ENCODE measurements at regions of chr10 and their contacts with region 1.

Region 1: DNA sequence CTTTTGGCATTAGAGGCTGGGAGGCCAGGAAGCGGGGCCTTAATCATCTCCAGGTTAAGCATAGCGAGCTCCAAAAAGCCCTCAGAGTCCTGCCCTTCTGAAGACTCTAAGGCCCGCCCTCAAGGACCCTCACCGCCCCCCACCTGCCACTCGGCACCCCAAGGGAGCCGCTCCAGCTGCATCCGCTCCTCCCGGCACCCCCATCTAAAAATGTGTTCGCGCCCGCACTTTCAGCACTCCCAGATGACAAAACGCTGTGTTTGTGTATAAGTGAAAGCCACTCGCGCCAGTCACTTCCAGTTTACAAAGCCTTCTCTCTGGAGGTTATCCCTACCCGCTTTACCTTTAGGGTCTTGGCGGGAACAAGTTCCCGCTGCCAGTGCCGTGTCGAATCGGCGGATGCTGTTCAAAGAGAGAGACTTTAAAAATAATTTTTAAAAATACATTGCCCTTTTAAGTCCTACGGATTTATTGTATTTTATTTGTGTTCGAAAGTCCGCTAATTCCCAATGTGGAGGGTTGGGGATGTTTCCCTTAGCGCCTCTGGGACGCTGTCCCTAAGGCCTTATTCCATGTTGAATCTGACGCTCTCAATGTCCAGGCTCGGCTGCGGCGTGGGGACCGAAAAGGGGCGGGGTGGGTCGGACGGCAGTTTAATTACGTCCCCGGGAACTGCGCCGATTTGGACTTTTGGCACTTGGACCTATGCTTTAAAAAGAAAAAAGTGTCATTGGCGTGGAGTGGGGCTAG is at the starts of genes DCLRE1A and NHLRC2:
- DNase-seq: peak; percentile 29
- H3K4me3 Mint-ChIP-seq: peak within 1 kb of the TSS; percentile 97
- H3K27ac Mint-ChIP-seq: peak within 1 kb of the TSS; percentile 95
- H3K4me1 Mint-ChIP-seq: peaks cover 56% of the 10 kb centered on the region
- H3K27me3 Mint-ChIP-seq: no peaks in the 10 kb centered on the region
- total RNA-seq, gene DCLRE1A: 14.1 and 15.2 TPM in 2 replicates
- total RNA-seq, gene NHLRC2: 25.9 and 26.0 TPM in 2 replicates

Region 2: DNA sequence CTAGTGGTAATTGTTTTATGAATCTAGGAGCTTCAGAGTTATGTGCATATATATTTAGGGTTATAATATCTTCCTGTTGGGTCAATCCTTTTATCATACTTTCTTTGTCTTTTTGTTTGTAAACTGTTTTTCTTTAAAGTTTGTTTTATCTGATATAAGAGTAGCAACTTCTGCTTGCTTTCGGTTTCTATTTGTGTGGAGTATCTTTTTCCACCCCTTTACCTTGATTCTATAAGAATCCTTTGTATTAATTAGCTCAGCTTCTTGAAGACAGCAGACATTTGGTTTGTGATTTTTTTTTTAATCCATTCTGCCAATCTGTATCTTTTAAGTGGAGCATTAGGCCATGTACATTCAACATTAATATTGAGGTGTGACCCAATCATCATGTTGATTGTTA is 165.1 kb before region 1 on chr10:
- intact Hi-C with region 1: loop called (anchors 5 kb)
- DNase-seq: no peak
- H3K4me3 Mint-ChIP-seq: peak overlapping the region; percentile 24
- H3K27ac Mint-ChIP-seq: peak overlapping the region; percentile 26
- H3K4me1 Mint-ChIP-seq: peaks cover 33% of the 10 kb centered on the region
- H3K27me3 Mint-ChIP-seq: no peaks in the 10 kb centered on the region

Region 3: GRCh38 chr10:113820507-113820906 is 33.7 kb before region 1 on chr10:
- intact Hi-C with region 1: no loop called
- DNase-seq: no peak
- H3K4me3 Mint-ChIP-seq: no peak overlapping the region
- H3K27ac Mint-ChIP-seq: no peak overlapping the region
- H3K4me1 Mint-ChIP-seq: no peaks in the 10 kb centered on the region
- H3K27me3 Mint-ChIP-seq: peaks cover 16% of the 10 kb centered on the region

Region 4: GRCh38 chr10:114043532-114044246 is 189.5 kb after region 1 on chr10 and contains the start of gene ADRB1:
- intact Hi-C with region 1: loop called (anchors 5 kb)
- DNase-seq: no peak
- H3K4me3 Mint-ChIP-seq: peak within 1 kb of the TSS; percentile 62
- H3K27ac Mint-ChIP-seq: no peak within 1 kb of the TSS
- H3K4me1 Mint-ChIP-seq: peaks cover 21% of the 10 kb centered on the region
- H3K27me3 Mint-ChIP-seq: peaks cover 73% of the 10 kb centered on the region
- total RNA-seq, gene ADRB1: not detected in 2 replicates

Region 5: GRCh38 chr10:114083040-114083439 is 228.9 kb after region 1 on chr10:
- intact Hi-C with region 1: loop called (anchors 5 kb)
- DNase-seq: no peak
- H3K4me3 Mint-ChIP-seq: no peak overlapping the region
- H3K27ac Mint-ChIP-seq: no peak overlapping the region
- H3K4me1 Mint-ChIP-seq: peaks cover 1% of the 10 kb centered on the region
- H3K27me3 Mint-ChIP-seq: peaks cover 40% of the 10 kb centered on the region

Region 6: GRCh38 chr10:114103284-114103683 is 249.1 kb after region 1 on chr10:
- intact Hi-C with region 1: loop called (anchors 5 kb)
- DNase-seq: no peak
- H3K4me3 Mint-ChIP-seq: no peak overlapping the region
- H3K27ac Mint-ChIP-seq: no peak overlapping the region
- H3K4me1 Mint-ChIP-seq: peaks cover 24% of the 10 kb centered on the region
- H3K27me3 Mint-ChIP-seq: peaks cover 50% of the 10 kb centered on the region

Region 7: DNA sequence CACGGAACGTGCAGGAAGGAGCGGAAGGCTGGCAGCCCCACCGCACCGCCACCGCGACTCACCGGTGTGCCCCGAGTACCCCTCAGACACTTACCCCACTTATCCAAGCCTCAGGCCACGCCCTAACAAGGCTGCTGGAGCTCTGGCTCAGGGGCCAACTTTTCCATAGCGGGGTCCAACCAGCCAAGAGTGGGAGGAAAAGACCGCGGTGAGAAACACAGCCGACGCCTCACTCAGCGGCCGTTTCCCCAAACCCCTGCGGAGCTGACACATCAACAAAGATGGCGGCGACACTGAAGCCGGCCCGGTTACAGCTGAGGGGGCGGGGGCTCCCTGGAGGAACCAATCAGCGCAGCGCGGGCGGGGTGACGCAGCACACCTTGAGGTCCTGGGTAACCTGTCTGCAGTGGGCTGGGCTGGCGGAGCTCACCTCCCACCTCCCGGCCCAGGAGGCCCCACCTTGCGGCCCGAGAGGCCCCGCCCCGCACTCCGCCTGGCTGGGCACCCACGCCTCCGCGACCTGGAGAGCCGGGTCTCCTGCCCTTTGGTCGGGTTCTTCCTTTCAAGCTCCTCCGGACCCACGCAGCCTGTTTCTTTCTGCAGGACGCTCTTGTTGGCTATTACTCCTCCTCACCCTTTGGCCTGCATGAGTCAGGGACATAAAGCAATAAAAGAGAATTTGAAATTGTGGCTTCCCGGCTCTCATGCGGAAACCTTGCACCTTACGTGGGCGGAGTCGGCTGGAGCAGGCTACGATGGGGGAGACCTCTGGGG is 319.9 kb after region 1 on chr10 and contains the start of gene CCDC186:
- intact Hi-C with region 1: loop called (anchors 5 kb)
- DNase-seq: peak; percentile 95
- H3K4me3 Mint-ChIP-seq: peak within 1 kb of the TSS; percentile 97
- H3K27ac Mint-ChIP-seq: peak within 1 kb of the TSS; percentile 95
- H3K4me1 Mint-ChIP-seq: peaks cover 24% of the 10 kb centered on the region
- H3K27me3 Mint-ChIP-seq: peaks cover 26% of the 10 kb centered on the region
- total RNA-seq, gene CCDC186: 11.3 and 13.9 TPM in 2 replicates

Measured in activated T-helper 2 cell treated with anti-CD3 and anti-CD28 coated beads, Interferon-gamma antibody, Interleukin-2, Interleukin-4, amounts not matched to agents 10 μg/mL and 5 μg/mL and 100 μg/mL, durations not matched to agents 14 hours and 24 hours and 36 hours (primary cell).